ENCODE measurements at regions of chr22 and their contacts with region 1.

Region 1: GRCh38 chr22:29245637-29246385 is 22.0 kb downstream of the RHBDD3 start:
- DNase-seq: peak; percentile 34
- H3K4me3 ChIP-seq: no peak overlapping the region
- H3K27ac ChIP-seq: no peak overlapping the region
- H3K4me1 ChIP-seq: no peaks in the 10 kb centered on the region
- H3K27me3 ChIP-seq: peaks cover 3% of the 10 kb centered on the region
- CTCF ChIP-seq: peak; percentile 96 to 98

Region 2: DNA sequence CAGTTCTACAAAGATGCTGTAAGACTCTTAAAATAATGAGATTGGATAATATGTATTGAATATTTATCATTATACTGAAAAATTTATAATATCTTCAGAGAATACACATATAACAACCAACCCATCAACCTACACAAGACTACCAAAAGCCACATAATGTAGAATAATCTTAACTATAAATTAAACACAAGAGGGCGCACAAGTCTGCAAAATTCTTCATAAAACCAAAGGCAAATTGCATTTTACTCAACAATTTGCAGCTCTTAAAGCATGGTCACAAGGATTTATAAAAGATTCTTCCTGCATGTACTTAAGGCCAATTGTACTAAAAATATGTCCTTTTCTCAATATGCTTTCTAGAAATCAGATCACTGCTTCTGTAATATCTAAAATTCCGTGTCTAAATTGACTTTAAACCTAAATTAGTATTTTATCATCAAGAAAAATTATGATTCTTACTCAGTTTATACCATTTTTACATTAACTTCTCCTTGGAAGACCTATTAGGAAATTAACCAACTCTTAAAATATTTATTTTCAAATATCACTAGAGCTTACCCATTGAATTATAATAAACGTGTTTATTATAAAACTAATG is 645.2 kb before region 1 on chr22:
- CTCF ChIA-PET with region 1: interaction called, 4 read pairs
- dilution Hi-C with region 1: no loop called
- in situ Hi-C with region 1: loop called (anchors 25 kb)
- intact Hi-C with region 1: loop called (anchors 1 kb)
- DNase-seq: peak; percentile 24
- H3K4me3 ChIP-seq: no peak overlapping the region
- H3K27ac ChIP-seq: no peak overlapping the region
- H3K4me1 ChIP-seq: no peaks in the 10 kb centered on the region
- H3K27me3 ChIP-seq: no peaks in the 10 kb centered on the region
- CTCF ChIP-seq: peak; percentile 34 to 46

Region 3: DNA sequence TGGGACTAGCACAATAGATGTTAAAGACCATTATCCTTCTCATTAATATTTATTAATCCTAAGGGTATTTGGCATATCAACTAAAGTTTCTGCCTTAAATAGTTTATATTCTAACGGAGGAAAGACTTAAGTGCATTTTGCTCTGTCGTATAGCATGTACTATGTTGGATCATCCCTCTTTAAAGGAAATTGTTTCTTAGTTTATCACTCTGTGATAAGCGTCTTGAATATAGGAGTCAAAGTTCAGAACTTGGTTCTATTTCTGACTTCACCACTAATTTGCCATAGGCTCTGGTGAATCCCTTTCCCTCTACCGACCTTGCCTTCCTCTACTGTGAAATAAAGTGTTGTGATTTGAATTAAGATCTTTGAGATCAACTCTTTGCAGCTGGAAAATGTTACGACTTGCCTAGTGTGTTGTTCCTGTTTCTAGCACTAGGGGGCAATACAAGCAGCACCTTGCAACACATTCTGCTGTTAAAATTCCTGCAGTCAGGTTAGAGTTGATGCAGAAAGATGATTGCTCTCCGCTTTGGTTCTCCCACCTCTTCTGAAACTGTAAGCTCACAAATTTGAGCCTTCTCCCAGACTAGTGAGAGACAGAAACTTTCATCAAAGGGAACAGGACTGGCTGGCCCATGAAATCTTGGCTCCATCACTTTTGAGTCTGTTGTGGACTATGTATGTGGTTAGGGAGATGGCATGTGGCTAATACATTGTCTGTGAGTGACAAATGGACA is 390.3 kb before region 1 on chr22:
- CTCF ChIA-PET with region 1: no interaction called
- dilution Hi-C with region 1: no loop called
- in situ Hi-C with region 1: loop called (anchors 10 to 25 kb)
- intact Hi-C with region 1: loop called (anchors 1 kb)
- DNase-seq: peak; percentile 50
- H3K4me3 ChIP-seq: no peak overlapping the region
- H3K27ac ChIP-seq: no peak overlapping the region
- H3K4me1 ChIP-seq: no peaks in the 10 kb centered on the region
- H3K27me3 ChIP-seq: no peaks in the 10 kb centered on the region
- CTCF ChIP-seq: peak; percentile 85 to 91

Region 4: DNA sequence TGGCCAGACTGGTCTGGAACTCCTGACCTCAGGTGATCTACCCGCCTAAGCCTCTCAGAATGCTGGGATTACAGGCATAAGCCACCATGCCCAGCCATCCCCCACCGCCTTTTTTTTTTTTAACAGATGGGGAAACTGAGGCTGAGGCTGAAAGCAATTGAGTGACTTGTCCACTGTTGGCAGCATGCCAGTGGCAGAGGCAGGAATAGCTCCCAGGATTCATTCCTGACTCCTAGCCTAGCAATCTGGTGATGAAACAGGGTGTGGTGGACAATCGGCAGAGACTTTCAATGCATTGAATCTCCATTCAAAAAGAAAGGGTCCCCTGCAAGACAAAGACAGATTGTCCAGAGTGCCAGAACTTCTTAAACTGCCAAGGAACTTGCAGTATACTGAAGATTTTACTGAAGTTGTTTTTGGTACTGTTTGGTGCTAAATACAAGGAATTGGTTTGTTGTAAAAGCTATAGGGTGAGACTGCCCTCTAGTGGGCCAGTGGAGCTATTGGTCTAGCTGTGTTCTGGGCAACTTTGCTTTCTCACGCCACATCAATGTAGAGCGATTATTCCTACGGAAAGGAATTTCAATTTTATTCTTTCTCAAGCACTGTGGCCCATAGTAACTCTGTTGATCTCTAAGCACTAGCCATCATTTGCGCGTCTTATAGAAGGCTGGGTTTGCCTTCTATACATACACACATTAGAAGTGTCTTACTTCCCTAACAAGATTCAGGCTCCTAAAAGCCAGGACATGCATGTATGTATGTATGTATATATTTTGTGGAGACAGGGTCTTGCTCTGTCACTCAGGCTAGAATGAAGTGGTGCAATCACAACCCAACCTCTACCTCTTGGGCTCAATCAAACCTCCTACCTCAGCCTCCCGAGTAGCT is 205.2 kb before region 1 on chr22:
- CTCF ChIA-PET with region 1: no interaction called
- dilution Hi-C with region 1: no loop called
- in situ Hi-C with region 1: no loop called
- intact Hi-C with region 1: loop called (anchors 1 kb)
- DNase-seq: peak; percentile 63
- H3K4me3 ChIP-seq: no peak overlapping the region
- H3K27ac ChIP-seq: peak overlapping the region; percentile 25
- H3K4me1 ChIP-seq: peaks cover 30% of the 10 kb centered on the region
- H3K27me3 ChIP-seq: no peaks in the 10 kb centered on the region
- CTCF ChIP-seq: peak; percentile 98 to 99

Region 5: GRCh38 chr22:29205594-29206371 is 40.0 kb before region 1 on chr22 and contains the start of gene EMID1:
- CTCF ChIA-PET with region 1: no interaction called
- dilution Hi-C with region 1: no loop called
- in situ Hi-C with region 1: no loop called
- intact Hi-C with region 1: loop called (anchors 2 kb)
- DNase-seq: no peak
- H3K4me3 ChIP-seq: peak within 1 kb of the TSS in 2 of 3 experiments; percentile 38 to 40
- H3K27ac ChIP-seq: no peak within 1 kb of the TSS
- H3K4me1 ChIP-seq: peaks cover 3% of the 10 kb centered on the region
- H3K27me3 ChIP-seq: peaks cover 12% of the 10 kb centered on the region
- CTCF ChIP-seq: peak in 1 of 2 donors; percentile 15
- total RNA-seq, gene EMID1: 0.67 TPM in 1 of 2 donors, not detected in the other